GM10248 (cell line): ENCODE measurements at regions of chr12 and their contacts with region 1.

Region 1: GRCh38 chr12:27434673-27435565 is 11.6 kb upstream of the SMCO2 start:
- DNase-seq: peak; percentile 45
- CTCF ChIP-seq: peak; percentile 44

Region 2: DNA sequence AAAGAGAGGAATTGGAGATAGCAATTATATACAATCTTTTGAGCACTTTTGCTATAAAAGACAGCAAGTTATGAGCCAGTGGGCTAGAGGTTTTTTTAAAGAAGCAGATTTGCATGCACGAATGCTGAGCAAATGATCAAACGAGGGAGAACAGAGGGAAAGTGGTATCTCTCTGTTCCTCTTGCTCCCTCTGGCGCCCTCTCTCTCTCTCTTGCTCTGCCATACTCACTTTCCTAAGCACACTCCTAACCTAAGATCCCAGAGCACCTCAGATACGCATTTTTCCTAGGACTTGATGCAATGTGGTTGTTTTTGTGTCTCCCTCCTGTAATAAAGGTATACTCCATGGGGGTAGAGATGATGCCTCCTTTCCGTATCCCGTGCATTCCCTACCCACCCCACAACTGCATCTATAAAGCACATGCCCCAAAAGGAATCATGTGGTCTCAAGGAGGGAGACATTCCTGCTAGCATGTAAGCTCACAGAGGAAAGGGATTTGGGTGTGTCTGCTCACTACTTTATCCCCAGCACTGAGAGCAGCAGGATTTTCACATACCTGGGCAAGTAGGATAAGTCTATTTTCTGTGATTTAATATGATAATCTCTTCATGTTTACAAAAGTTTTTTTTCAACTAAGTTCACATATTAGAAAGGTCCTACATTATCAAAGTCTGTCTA is 969.4 kb before region 1 on chr12:
- CTCF ChIA-PET with region 1: no interaction called
- POLR2A ChIA-PET with region 1: no interaction called
- DNase-seq: no peak
- CTCF ChIP-seq: no peak

Region 3: GRCh38 chr12:27447761-27448160 is 12.8 kb after region 1 on chr12:
- CTCF ChIA-PET with region 1: interaction called, 37 read pairs
- POLR2A ChIA-PET with region 1: no interaction called
- DNase-seq: no peak
- CTCF ChIP-seq: no peak

Region 4: DNA sequence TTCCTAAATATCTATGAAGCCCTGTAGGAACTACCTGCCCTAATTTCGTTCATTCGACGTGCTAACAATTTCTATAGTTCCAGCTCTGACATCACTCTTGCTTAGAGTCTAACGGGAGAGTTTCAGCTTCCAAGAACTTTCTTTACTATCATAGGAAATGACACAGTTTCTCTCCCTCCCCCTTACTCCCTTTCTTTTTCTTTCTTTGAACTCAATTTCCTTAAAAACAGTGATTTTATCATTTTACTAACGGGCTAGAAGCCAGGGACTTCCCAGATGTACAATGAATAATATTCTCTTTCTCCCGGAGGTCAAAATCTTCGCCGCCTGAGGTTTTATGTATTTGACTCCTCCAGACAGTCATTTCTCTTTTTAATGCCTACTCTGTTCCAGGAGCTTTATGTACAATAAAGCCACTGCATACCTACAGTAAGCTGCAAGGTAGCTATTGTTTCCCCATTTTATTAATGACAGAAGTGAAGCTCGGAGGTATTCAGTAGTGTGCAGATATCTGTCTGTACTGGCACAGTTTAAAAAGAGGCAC is 27.3 kb after region 1 on chr12:
- CTCF ChIA-PET with region 1: interaction called, 11 read pairs
- POLR2A ChIA-PET with region 1: no interaction called
- DNase-seq: no peak
- CTCF ChIP-seq: no peak

Region 5: DNA sequence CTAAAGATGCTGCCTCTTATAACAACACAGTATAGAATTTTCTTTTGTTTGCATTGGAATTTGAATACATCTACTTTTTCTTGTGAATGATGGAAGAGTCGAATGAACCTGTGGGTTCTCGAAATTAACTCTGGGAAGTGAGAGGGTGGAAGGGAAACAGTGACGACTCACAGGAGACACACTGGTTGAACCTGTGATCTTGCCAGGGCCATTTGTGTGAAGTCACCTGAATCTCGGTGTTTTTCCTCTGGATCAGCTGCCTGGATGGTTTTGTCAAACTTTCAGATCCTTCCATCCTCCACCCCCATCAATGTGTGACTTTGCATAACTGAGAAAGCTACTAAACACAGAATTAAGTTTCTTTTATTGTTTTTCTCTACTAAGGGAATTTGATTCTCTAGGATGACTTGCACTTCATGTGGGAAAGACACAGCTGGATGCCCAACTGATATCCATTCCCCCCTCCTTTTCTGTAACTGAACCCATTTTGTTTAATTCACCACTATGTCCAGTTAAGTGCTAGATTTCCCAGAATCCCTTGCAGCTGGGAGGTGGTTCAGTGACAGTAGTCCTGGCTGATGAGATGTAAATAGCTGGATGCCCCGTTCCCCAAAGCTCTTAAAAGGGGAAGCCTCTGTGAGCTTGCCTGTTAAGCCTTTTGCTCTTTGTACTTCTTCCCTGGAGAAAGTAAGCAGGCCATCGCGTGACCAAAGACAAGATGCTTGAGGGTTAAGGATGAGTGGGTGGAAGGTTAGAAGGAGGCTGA is 95.4 kb after region 1 on chr12:
- CTCF ChIA-PET with region 1: interaction called, 11 read pairs
- POLR2A ChIA-PET with region 1: no interaction called
- DNase-seq: no peak
- CTCF ChIP-seq: no peak

Region 6: GRCh38 chr12:27635349-27635972 is 200.5 kb after region 1 on chr12:
- CTCF ChIA-PET with region 1: interaction called, 13 read pairs
- POLR2A ChIA-PET with region 1: no interaction called
- DNase-seq: peak; percentile 20
- CTCF ChIP-seq: peak; percentile 35

Region 7: GRCh38 chr12:27652174-27652763 is 217.3 kb after region 1 on chr12:
- CTCF ChIA-PET with region 1: interaction called, 18 read pairs
- POLR2A ChIA-PET with region 1: no interaction called
- DNase-seq: peak; percentile 48
- CTCF ChIP-seq: peak; percentile 83

Region 8: GRCh38 chr12:27703710-27704452 is 269.0 kb after region 1 on chr12:
- CTCF ChIA-PET with region 1: interaction called, 10 read pairs
- POLR2A ChIA-PET with region 1: no interaction called
- DNase-seq: peak; percentile 68
- CTCF ChIP-seq: peak; percentile 89